A549 (cell line): ENCODE measurements at regions of chr2 and their contacts with region 1.

Region 1: GRCh38 chr2:207746131-207746530 is 23.6 kb downstream of the FZD5 start:
- DNase-seq: peak; percentile 41 to 81
- ATAC-seq: peak; percentile 81 to 82
- H3K4me3 ChIP-seq: no peak overlapping the region
- H3K27ac ChIP-seq: peak overlapping the region; percentile 1 to 74; a peak in 3 of 6 replicates
- H3K4me1 ChIP-seq: peaks cover 52% of the 10 kb centered on the region
- CTCF ChIP-seq: peak; percentile 98
- EP300 ChIP-seq: no peak
- POLR2A ChIP-seq: no peak
- RAD21 ChIP-seq: peak; percentile 98 to 99

Region 2: DNA sequence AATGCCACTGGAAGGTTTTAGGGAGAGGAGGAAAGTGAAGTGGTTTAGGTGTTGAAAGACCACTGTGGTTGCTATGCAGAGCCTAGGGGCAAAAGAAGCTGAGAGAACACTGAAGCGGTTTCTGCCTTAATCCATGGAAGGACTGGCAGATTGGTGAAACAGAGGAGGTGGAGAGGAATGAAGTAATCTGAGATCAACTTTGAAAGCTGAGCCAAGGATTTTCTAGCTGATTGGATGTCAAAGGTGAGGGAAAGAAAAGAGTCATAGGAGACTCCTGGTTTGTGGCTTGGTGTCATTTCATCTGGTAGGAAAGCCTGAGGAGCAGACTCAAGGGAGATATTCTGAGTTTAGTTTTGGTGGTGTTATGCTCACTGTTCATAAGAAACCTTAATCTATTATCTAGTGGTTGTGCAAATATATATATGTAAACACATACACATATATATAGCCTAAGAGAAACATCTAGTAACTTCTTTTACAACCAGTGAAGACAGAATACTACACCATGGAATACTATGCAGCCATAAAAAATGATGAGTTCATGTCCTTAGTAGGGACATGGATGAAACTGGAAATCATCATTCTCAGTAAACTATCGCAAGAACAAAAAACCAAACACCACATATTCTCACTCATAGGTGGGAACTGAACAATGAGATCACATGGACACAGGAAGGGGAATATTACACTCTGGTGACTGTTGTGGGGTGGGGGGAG is 350.4 kb before region 1 on chr2:
- CTCF ChIA-PET with region 1: no interaction called
- POLR2A ChIA-PET with region 1: no interaction called
- DNase-seq: peak in 1 of 2 experiments; percentile 13
- ATAC-seq: no peak
- H3K4me3 ChIP-seq: 0 out of 3 replicates have a peak overlapping the region, but pooled peaks have one; percentile 7
- H3K27ac ChIP-seq: peak overlapping the region; percentile 92
- H3K4me1 ChIP-seq: peaks cover 25% of the 10 kb centered on the region
- CTCF ChIP-seq: no peak
- EP300 ChIP-seq: no peak
- POLR2A ChIP-seq: no peak
- RAD21 ChIP-seq: no peak

Region 3: GRCh38 chr2:207625018-207625907 is 120.9 kb before region 1 on chr2 and contains the start of gene METTL21A:
- CTCF ChIA-PET with region 1: interaction called, 24 read pairs
- POLR2A ChIA-PET with region 1: interaction called, 3 read pairs
- DNase-seq: peak; percentile 92 to 93
- ATAC-seq: peak; percentile 77 to 80
- H3K4me3 ChIP-seq: peak within 1 kb of the TSS; percentile 82
- H3K27ac ChIP-seq: peak within 1 kb of the TSS; percentile 98 to 99
- H3K4me1 ChIP-seq: peaks cover 13% of the 10 kb centered on the region
- CTCF ChIP-seq: peak; percentile 43; the same call in 2 of the 3 replicates
- EP300 ChIP-seq: no peak
- POLR2A ChIP-seq: peak; percentile 80
- RAD21 ChIP-seq: no peak; a peak in 1 of 5 replicates
- polyA plus RNA-seq, gene METTL21A: 31.1 and 40.1 TPM in 2 replicates

Region 4: GRCh38 chr2:207725873-207726578 is 20.1 kb before region 1 on chr2:
- CTCF ChIA-PET with region 1: interaction called, 29 read pairs
- POLR2A ChIA-PET with region 1: no interaction called
- DNase-seq: peak in 1 of 2 experiments; percentile 31
- ATAC-seq: peak; percentile 52 to 56; a peak in 5 of 6 replicates
- H3K4me3 ChIP-seq: no peak overlapping the region
- H3K27ac ChIP-seq: peak overlapping the region; percentile 28 to 74; a peak in 4 of 6 replicates
- H3K4me1 ChIP-seq: peaks cover 61% of the 10 kb centered on the region
- CTCF ChIP-seq: no peak
- EP300 ChIP-seq: no peak
- POLR2A ChIP-seq: no peak
- RAD21 ChIP-seq: no peak

Region 5: DNA sequence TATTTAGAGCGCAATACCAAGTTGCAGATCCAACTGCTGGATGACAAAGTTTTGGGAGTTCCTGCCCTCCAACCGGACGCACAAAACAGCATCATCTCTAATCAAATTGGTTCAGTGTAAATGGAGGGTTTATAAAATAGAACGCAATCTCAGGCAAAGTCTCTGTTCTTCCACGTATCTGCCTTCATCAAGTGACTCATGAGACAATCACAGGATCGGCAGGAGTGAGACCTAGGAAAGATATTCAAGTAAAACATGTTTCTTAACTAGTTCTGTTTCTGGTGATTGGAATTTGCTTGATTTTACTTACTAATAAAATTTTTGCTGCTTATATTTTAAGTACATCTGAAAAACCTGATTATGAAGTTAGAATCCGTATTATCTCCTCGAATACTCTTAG is 16.0 kb after region 1 on chr2:
- CTCF ChIA-PET with region 1: interaction called, 67 read pairs
- POLR2A ChIA-PET with region 1: interaction called, 6 read pairs
- DNase-seq: no peak
- ATAC-seq: no peak
- H3K4me3 ChIP-seq: no peak overlapping the region
- H3K27ac ChIP-seq: no peak overlapping the region
- H3K4me1 ChIP-seq: peaks cover 30% of the 10 kb centered on the region
- CTCF ChIP-seq: no peak
- EP300 ChIP-seq: no peak
- POLR2A ChIP-seq: no peak
- RAD21 ChIP-seq: no peak

Region 6: GRCh38 chr2:207833251-207833751 is 87.2 kb after region 1 on chr2:
- CTCF ChIA-PET with region 1: no interaction called
- POLR2A ChIA-PET with region 1: no interaction called
- DNase-seq: no peak
- ATAC-seq: peak; percentile 36 to 37; a peak in 1 of 6 replicates
- H3K4me3 ChIP-seq: no peak overlapping the region
- H3K27ac ChIP-seq: peak overlapping the region in 1 of 2 experiments; percentile 16; a peak in 1 of 6 replicates
- H3K4me1 ChIP-seq: peaks cover 44% of the 10 kb centered on the region
- CTCF ChIP-seq: no peak
- EP300 ChIP-seq: no peak
- POLR2A ChIP-seq: no peak
- RAD21 ChIP-seq: no peak

Region 7: GRCh38 chr2:207869784-207870778 is 124.0 kb after region 1 on chr2:
- CTCF ChIA-PET with region 1: no interaction called
- POLR2A ChIA-PET with region 1: no interaction called
- DNase-seq: peak; percentile 27 to 83
- ATAC-seq: peak; percentile 92 to 96
- H3K4me3 ChIP-seq: no peak overlapping the region
- H3K27ac ChIP-seq: peak overlapping the region; percentile 72 to 83
- H3K4me1 ChIP-seq: peaks cover 41% of the 10 kb centered on the region
- CTCF ChIP-seq: no peak
- EP300 ChIP-seq: peak in 1 of 2 experiments; percentile 28; a peak in 1 of 5 replicates
- POLR2A ChIP-seq: no peak
- RAD21 ChIP-seq: peak in 1 of 2 experiments; percentile 19; a peak in 1 of 5 replicates

Region 8: GRCh38 chr2:207902821-207903220 is 156.7 kb after region 1 on chr2:
- CTCF ChIA-PET with region 1: no interaction called
- POLR2A ChIA-PET with region 1: no interaction called
- DNase-seq: no peak
- ATAC-seq: no peak
- H3K4me3 ChIP-seq: no peak overlapping the region
- H3K27ac ChIP-seq: no peak overlapping the region
- H3K4me1 ChIP-seq: peaks cover 15% of the 10 kb centered on the region
- CTCF ChIP-seq: no peak
- EP300 ChIP-seq: no peak
- POLR2A ChIP-seq: no peak
- RAD21 ChIP-seq: no peak

Region 9: GRCh38 chr2:207974216-207974605 is 228.1 kb after region 1 on chr2:
- CTCF ChIA-PET with region 1: interaction called, 80 read pairs
- POLR2A ChIA-PET with region 1: no interaction called
- DNase-seq: peak in 1 of 2 experiments; percentile 26
- ATAC-seq: peak; percentile 51 to 59; a peak in 5 of 6 replicates
- H3K4me3 ChIP-seq: no peak overlapping the region
- H3K27ac ChIP-seq: no peak overlapping the region
- H3K4me1 ChIP-seq: peaks cover 24% of the 10 kb centered on the region
- CTCF ChIP-seq: no peak
- EP300 ChIP-seq: no peak
- POLR2A ChIP-seq: no peak
- RAD21 ChIP-seq: no peak

Region 10: GRCh38 chr2:208033758-208034502 is 287.8 kb after region 1 on chr2:
- CTCF ChIA-PET with region 1: interaction called, 191 read pairs
- POLR2A ChIA-PET with region 1: no interaction called
- DNase-seq: peak in 1 of 2 experiments; percentile 65
- ATAC-seq: peak; percentile 63 to 75; a peak in 4 of 6 replicates
- H3K4me3 ChIP-seq: no peak overlapping the region
- H3K27ac ChIP-seq: no peak overlapping the region
- H3K4me1 ChIP-seq: 0 out of 3 replicates have a peak, but pooled peaks cover 6% of the 10 kb centered on the region
- CTCF ChIP-seq: no peak; the same call in 2 of the 3 replicates
- EP300 ChIP-seq: no peak
- POLR2A ChIP-seq: no peak
- RAD21 ChIP-seq: peak; percentile 45 to 48; a peak in 3 of 5 replicates

Region 11: DNA sequence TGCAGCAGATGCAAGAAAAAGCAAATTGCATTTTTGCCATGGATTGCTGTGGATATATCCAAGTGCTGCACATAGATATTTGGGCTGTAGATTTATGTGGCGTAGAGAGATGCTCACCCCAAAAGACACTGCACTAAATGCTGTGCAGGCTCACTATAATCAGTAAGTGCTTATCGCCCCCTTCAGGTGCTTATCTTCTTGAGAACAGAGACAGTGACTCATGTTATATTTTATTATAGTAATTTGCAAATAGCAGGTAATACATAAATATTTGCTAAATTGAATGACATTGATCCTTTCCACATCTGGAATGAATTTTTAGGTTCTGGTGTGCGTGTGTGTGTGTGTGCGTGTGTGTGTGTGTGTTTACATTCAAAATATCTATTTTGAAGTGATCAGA is 316.0 kb after region 1 on chr2:
- CTCF ChIA-PET with region 1: interaction called, 202 read pairs
- POLR2A ChIA-PET with region 1: no interaction called
- DNase-seq: peak in 1 of 2 experiments; percentile 65
- ATAC-seq: peak; percentile 84 to 94
- H3K4me3 ChIP-seq: no peak overlapping the region
- H3K27ac ChIP-seq: no peak overlapping the region
- H3K4me1 ChIP-seq: no peaks in the 10 kb centered on the region
- CTCF ChIP-seq: peak; percentile 63
- EP300 ChIP-seq: no peak
- POLR2A ChIP-seq: no peak
- RAD21 ChIP-seq: peak; percentile 71; a peak in 4 of 5 replicates